HEK293T (cell line): ENCODE measurements at regions of chr6 and their contacts with region 1.

Region 1: GRCh38 chr6:31689249-31690110 is 8.6 kb upstream of the LY6G5C start:
- DNase-seq: peak; percentile 42

Region 2: DNA sequence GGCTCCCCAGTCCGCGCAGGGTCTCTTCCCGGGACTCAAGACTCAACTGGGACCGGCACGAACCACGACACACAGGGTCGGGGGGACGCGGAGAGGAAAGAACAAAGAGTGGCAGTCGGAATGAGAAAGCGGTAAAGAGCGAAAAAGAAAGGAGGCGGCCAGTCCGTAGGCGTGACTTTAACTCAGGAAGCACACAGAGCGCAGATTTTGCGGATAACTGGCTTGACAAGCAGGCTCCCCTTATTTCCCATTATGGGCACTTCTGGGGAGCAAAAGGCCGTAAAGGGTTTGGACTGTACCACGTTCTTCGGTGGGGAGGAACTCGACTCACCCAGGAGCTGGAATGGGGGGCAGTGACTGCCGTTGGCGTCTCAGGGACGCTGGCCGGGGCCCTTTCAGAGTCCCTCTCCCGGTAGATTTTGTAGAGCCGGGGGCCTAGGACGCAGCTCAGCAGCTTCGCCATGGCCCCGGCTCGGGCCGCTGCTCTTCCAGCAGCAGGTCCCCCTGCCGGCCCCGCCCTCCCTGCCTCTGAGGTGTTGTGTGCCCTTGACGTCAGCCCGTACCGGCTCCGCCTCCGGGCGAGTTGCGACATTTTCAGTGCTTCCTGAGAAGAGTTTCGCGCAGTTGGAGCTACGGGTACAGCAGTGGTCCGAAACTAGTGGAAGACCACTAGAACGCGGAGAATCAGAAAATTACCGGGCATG is 13.5 kb after region 1 on chr6 and contains the start of gene ABHD16A:
- CTCF ChIA-PET with region 1: interaction called, 3 read pairs
- POLR2A ChIA-PET with region 1: interaction called, 30 read pairs
- DNase-seq: peak; percentile 99